Activated CD4-positive, alpha-beta memory T cell treated with anti-CD3 and anti-CD28 coated beads, Interleukin-2, amount 10 ng/mL, durations not matched to agents 7 days and 5 days (primary cell): ENCODE measurements at regions of chr18 and their contacts with region 1.

Region 1: DNA sequence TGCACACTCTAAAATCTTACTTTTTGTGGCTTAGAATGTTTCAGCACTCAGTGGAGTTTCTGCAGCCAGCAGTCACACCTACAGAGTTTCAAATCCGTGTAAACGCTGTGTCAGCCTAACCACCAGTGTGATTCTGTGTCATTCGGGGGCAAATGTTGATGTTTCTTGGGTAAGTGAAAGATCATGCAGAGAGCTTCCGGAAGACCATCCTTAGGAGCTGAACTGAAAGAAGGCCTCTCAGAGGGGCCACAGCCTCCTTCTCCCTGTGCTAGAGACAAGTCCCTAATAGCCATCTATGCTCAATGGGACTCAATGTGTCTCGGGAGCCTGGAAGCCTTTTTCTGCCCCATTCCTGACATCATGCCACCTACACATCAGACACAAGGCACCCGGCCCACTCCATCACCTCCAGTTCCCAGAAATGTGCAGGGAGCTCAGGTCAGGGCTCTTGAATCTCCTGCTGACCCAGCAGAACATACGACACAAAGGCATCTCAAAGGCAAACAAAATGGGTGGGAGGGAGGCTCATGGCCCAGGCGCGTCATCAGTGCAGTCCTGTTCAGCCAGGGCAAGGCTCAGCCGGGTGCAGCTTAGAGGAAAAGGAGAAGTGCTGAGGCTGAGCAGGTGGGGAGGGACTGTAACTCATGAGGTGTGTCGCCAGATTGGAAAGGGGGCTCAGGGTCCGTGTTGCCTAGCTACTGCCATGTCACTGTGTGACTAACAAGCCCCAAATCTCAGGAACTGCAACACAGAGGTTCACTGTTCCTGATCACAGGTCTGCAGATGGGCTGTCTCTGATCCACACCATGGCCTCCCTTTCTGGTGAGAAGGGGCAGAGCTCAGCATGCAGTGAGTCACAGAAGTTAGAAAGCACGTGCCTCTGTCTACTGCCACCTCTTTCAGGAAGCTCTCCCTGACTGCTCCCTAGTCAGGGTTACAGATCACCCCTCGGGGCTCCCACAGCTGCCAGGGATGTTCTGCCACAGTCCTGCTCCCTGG is 82.0 kb downstream of the SMAD7 start:
- DNase-seq: peak; percentile 76
- H3K4me3 Mint-ChIP-seq: peak overlapping the region; percentile 16
- H3K27ac Mint-ChIP-seq: peak overlapping the region; percentile 99
- H3K4me1 Mint-ChIP-seq: peaks cover 41% of the 10 kb centered on the region
- H3K27me3 Mint-ChIP-seq: no peaks in the 10 kb centered on the region

Region 2: GRCh38 chr18:48842259-48843061 is 26.3 kb before region 1 on chr18:
- CTCF ChIA-PET with region 1: interaction called, 3 read pairs
- POLR2A ChIA-PET with region 1: interaction called, 37 read pairs
- DNase-seq: peak; percentile 68
- H3K4me3 Mint-ChIP-seq: peak overlapping the region; percentile 31
- H3K27ac Mint-ChIP-seq: peak overlapping the region; percentile 81
- H3K4me1 Mint-ChIP-seq: peaks cover 63% of the 10 kb centered on the region
- H3K27me3 Mint-ChIP-seq: peaks cover 4% of the 10 kb centered on the region

Region 3: DNA sequence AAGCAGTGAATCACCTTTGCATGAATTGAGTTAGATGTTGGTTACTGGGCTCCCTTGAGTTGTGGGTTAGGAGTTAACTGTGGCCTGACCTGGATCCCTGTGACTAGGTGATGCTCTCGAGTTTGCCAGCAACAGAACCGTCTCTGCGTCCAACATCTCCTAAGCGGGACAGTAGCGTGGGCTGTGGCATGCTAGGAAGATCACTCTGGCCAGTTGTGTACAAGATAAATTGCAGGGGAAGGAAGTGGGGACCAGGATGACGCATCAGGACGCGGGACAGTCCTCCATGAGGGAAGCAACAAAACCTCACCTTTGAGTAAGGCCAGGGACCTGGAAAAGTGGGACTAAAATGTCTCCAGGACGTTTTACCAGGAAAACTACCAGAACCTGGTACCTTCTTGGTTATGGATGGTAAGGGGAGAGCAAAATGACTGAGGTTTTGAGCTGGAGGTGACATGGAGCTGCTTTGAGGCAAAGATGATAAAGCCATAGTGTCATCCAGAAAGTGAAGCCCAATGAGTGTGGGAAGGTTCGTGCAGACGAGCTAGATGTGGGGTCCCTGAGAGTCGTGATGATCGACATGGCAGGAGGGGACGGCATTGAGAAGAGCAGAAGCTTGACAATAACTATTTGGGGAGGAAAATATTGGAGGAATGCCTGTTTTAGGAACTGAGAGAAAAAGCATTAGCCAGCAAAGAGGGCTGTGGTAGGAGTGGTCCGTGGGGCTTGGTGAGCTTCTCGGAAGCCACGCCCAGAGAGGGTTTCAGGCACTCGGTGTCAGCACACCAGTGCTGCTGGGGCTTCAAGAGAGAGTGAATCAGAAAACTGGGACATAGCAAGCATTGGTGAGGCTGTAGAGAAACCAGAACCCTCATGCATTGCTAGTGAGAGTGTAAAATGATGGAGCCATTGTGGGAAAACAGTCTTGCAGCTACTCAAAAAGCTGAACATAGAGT is 13.1 kb before region 1 on chr18:
- CTCF ChIA-PET with region 1: interaction called, 8 read pairs
- POLR2A ChIA-PET with region 1: interaction called, 24 read pairs
- DNase-seq: peak; percentile 61
- H3K4me3 Mint-ChIP-seq: no peak overlapping the region
- H3K27ac Mint-ChIP-seq: peak overlapping the region; percentile 61
- H3K4me1 Mint-ChIP-seq: peaks cover 57% of the 10 kb centered on the region
- H3K27me3 Mint-ChIP-seq: no peaks in the 10 kb centered on the region